ENCODE measurements at regions of chr1 and their contacts with region 1.

Region 1: DNA sequence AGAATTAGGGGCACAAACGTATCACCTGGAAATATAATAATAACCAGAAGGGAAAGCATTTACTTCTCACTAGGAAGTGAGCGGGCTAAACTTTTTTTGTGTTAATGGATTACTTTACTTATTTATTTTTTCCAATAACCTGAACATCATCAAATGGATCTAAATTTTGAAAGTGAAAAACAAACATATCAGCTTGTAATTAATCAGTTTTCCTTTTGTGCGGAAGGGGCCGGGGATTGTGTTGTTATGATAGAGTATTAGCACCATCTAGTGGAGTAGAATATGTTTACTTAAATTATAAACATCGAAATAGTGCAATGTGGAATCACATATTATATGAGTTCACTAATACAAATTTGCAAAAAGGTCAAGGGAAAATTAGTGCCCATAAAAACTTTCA is 9.0 kb downstream of the CFH start:
- DNase-seq: peak in 1 of 2 donors; percentile 52
- ATAC-seq: peak in 2 of 3 donors; percentile 26 to 52
- H3K4me3 ChIP-seq: no peak overlapping the region
- H3K4me3 Mint-ChIP-seq: peak overlapping the region; percentile 32
- H3K27ac ChIP-seq: no peak overlapping the region
- H3K27ac Mint-ChIP-seq: no peak overlapping the region
- H3K4me1 ChIP-seq: no peaks in the 10 kb centered on the region
- H3K4me1 Mint-ChIP-seq: peaks cover 0 to 6% of the 10 kb centered on the region in 2 donors
- H3K27me3 ChIP-seq: no peaks in the 10 kb centered on the region
- H3K27me3 Mint-ChIP-seq: no peaks in the 10 kb centered on the region
- CTCF ChIP-seq: peak; percentile 61

Region 2: GRCh38 chr1:196148367-196148970 is 512.4 kb before region 1 on chr1:
- intact Hi-C with region 1: loop called (anchors 2 kb)
- DNase-seq: peak in 1 of 2 donors; percentile 26
- ATAC-seq: no peak
- H3K4me3 ChIP-seq: no peak overlapping the region
- H3K4me3 Mint-ChIP-seq: no peak overlapping the region
- H3K27ac ChIP-seq: no peak overlapping the region
- H3K27ac Mint-ChIP-seq: no peak overlapping the region
- H3K4me1 ChIP-seq: no peaks in the 10 kb centered on the region
- H3K4me1 Mint-ChIP-seq: no peaks in the 10 kb centered on the region
- H3K27me3 ChIP-seq: no peaks in the 10 kb centered on the region
- H3K27me3 Mint-ChIP-seq: no peaks in the 10 kb centered on the region
- CTCF ChIP-seq: peak; percentile 29

Region 3: GRCh38 chr1:196355206-196355786 is 305.6 kb before region 1 on chr1:
- intact Hi-C with region 1: no loop called
- DNase-seq: peak in 1 of 2 donors; percentile 16
- ATAC-seq: no peak
- H3K4me3 ChIP-seq: no peak overlapping the region
- H3K4me3 Mint-ChIP-seq: no peak overlapping the region
- H3K27ac ChIP-seq: no peak overlapping the region
- H3K27ac Mint-ChIP-seq: no peak overlapping the region
- H3K4me1 ChIP-seq: no peaks in the 10 kb centered on the region
- H3K4me1 Mint-ChIP-seq: no peaks in the 10 kb centered on the region
- H3K27me3 ChIP-seq: no peaks in the 10 kb centered on the region
- H3K27me3 Mint-ChIP-seq: no peaks in the 10 kb centered on the region
- CTCF ChIP-seq: no peak

Measured in natural killer cell (primary cell).